Activated CD8-positive, alpha-beta memory T cell treated with anti-CD3 and anti-CD28 coated beads, Interleukin-2, amount 10 ng/mL, durations not matched to agents 7 days and 5 days (primary cell): ENCODE measurements at regions of chr22 and their contacts with region 1.

Region 1: GRCh38 chr22:36856121-36856791 is 4.5 kb upstream of the NCF4 start:
- DNase-seq: peak; percentile 94
- ATAC-seq: peak; percentile 54
- H3K4me3 Mint-ChIP-seq: peak overlapping the region; percentile 44
- H3K27ac Mint-ChIP-seq: peak overlapping the region; percentile 54
- H3K4me1 Mint-ChIP-seq: peaks cover 73% of the 10 kb centered on the region
- H3K27me3 Mint-ChIP-seq: peaks cover under 1% of the 10 kb centered on the region

Region 2: GRCh38 chr22:36560001-36560400 is 296.3 kb before region 1 on chr22:
- CTCF ChIA-PET with region 1: no interaction called
- DNase-seq: no peak
- ATAC-seq: no peak
- H3K4me3 Mint-ChIP-seq: no peak overlapping the region
- H3K27ac Mint-ChIP-seq: no peak overlapping the region
- H3K4me1 Mint-ChIP-seq: no peaks in the 10 kb centered on the region
- H3K27me3 Mint-ChIP-seq: peaks cover 24% of the 10 kb centered on the region

Region 3: GRCh38 chr22:36757668-36758211 is 98.5 kb before region 1 on chr22:
- CTCF ChIA-PET with region 1: interaction called, 10 read pairs
- DNase-seq: peak; percentile 86
- ATAC-seq: peak; percentile 93
- H3K4me3 Mint-ChIP-seq: no peak overlapping the region
- H3K27ac Mint-ChIP-seq: no peak overlapping the region
- H3K4me1 Mint-ChIP-seq: no peaks in the 10 kb centered on the region
- H3K27me3 Mint-ChIP-seq: peaks cover 10% of the 10 kb centered on the region

Region 4: GRCh38 chr22:36781656-36782627 is 74.3 kb before region 1 on chr22:
- CTCF ChIA-PET with region 1: interaction called, 180 read pairs
- DNase-seq: peak; percentile 94
- ATAC-seq: peak; percentile 95
- H3K4me3 Mint-ChIP-seq: peak overlapping the region; percentile 11
- H3K27ac Mint-ChIP-seq: peak overlapping the region; percentile 67
- H3K4me1 Mint-ChIP-seq: peaks cover 36% of the 10 kb centered on the region
- H3K27me3 Mint-ChIP-seq: peaks cover 11% of the 10 kb centered on the region

Region 5: GRCh38 chr22:36806835-36807234 is 49.4 kb before region 1 on chr22:
- CTCF ChIA-PET with region 1: interaction called, 10 read pairs
- DNase-seq: no peak
- ATAC-seq: no peak
- H3K4me3 Mint-ChIP-seq: no peak overlapping the region
- H3K27ac Mint-ChIP-seq: no peak overlapping the region
- H3K4me1 Mint-ChIP-seq: peaks cover 13% of the 10 kb centered on the region
- H3K27me3 Mint-ChIP-seq: peaks cover 6% of the 10 kb centered on the region

Region 6: DNA sequence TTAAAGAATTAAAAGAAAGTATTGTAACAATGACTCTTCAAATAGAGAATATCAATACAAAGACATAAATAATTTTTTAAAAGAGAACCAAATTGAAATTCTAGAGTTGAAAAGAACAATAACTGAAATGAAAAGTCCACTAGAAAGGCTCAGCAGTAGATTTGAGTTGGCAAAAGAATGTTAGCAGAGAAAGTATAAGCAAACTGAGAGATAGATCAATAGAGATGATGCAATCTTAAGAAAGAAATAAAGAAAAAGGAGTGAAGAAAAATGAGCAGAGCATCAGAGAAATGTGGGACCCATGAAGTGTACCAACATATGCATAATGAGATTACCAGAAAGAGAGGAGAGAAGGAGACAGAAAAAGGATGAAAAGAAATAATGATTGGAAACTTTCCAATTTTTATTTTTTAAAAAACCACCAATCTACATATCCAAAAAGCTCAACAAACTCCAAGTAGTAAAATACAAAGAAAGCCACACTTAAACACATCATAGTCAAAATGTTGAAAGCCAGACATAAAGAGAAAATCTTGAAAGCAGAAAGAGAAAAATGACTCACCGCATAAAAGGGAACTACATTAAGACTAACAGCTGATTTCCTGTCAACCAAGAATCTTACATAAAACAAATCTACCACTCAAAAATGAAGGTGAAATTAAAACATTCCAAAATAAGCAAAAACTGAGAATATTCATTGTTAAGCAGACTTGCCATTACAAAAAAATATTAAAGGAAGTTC is 25.4 kb after region 1 on chr22:
- CTCF ChIA-PET with region 1: interaction called, 66 read pairs
- DNase-seq: no peak
- ATAC-seq: no peak
- H3K4me3 Mint-ChIP-seq: no peak overlapping the region
- H3K27ac Mint-ChIP-seq: peak overlapping the region; percentile 64
- H3K4me1 Mint-ChIP-seq: peaks cover 19% of the 10 kb centered on the region
- H3K27me3 Mint-ChIP-seq: no peaks in the 10 kb centered on the region

Region 7: DNA sequence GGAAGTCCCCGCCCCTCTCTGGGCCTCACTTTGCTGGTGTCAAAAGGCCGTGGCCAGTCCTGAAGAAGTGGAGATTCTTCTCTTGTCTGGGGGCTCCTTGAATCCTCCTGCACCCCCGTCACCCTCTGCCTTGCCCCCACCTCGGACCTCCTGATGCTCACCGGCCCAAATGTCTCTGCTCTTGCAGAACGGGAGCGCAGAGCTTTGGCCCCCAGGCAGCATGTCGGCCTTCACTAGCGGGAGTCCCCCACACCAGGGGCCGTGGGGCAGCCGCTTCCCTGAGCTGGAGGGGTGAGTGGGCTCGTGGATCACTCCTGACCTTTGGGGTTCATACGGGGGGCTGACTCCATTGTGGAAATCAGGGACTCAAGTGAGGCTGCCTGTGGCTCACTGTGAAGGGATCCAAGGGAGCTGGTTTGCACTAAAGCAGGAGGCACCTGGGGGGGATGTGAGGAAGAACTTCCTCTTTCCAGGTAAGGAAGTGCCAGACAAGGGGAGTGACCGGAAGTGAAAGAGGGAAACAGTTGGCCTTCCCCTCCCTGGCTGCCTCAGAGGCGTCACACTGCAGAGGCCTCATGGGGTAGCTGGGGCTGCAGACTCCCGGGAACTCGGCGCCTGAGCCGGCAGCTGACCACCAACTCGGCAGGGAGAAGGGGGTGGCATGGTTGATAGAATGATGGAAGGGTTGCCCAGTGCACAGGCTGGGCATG is 80.3 kb after region 1 on chr22:
- CTCF ChIA-PET with region 1: interaction called, 10 read pairs
- DNase-seq: no peak
- ATAC-seq: no peak
- H3K4me3 Mint-ChIP-seq: no peak overlapping the region
- H3K27ac Mint-ChIP-seq: peak overlapping the region; percentile 34
- H3K4me1 Mint-ChIP-seq: peaks cover 4% of the 10 kb centered on the region
- H3K27me3 Mint-ChIP-seq: peaks cover 8% of the 10 kb centered on the region

Region 8: DNA sequence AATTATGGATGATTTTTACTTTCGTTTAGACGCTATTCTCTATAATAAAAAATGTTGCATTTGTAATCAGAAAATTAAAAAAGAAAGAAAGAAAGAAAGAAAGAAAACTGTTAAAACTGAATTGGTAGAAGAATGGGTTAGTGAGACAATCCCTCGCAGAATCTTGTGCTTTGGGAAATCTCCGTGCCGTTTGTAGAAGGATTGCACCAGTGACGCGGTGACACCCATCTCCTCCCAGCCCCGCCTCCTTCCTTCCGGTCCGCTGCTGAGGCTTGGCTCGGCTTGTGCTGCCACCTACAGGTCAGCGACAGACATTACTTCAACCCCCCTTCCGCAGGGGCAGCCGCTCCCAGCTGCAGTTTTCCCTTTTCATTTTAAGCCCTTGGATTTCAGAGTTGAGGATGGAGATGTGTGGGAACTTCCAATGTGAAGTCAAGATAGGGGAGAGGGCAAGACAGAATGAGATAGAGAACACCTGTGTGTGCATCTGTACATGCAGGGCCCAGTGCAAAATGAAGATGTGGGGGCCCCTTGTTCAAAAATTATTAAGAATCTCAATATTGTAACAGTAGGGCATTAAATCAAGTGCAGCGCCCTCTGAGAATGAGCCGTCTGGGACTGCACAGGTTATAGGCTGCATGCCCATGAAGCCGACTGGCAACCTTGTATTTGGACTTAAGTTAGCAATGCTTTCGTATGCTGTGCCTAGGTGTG is 121.8 kb after region 1 on chr22:
- CTCF ChIA-PET with region 1: interaction called, 229 read pairs
- DNase-seq: peak; percentile 94
- ATAC-seq: peak; percentile 90
- H3K4me3 Mint-ChIP-seq: peak overlapping the region; percentile 80
- H3K27ac Mint-ChIP-seq: peak overlapping the region; percentile 87
- H3K4me1 Mint-ChIP-seq: peaks cover 18% of the 10 kb centered on the region
- H3K27me3 Mint-ChIP-seq: peaks cover 3% of the 10 kb centered on the region